ENCODE measurements at regions of chr10 and their contacts with region 1.

Region 1: DNA sequence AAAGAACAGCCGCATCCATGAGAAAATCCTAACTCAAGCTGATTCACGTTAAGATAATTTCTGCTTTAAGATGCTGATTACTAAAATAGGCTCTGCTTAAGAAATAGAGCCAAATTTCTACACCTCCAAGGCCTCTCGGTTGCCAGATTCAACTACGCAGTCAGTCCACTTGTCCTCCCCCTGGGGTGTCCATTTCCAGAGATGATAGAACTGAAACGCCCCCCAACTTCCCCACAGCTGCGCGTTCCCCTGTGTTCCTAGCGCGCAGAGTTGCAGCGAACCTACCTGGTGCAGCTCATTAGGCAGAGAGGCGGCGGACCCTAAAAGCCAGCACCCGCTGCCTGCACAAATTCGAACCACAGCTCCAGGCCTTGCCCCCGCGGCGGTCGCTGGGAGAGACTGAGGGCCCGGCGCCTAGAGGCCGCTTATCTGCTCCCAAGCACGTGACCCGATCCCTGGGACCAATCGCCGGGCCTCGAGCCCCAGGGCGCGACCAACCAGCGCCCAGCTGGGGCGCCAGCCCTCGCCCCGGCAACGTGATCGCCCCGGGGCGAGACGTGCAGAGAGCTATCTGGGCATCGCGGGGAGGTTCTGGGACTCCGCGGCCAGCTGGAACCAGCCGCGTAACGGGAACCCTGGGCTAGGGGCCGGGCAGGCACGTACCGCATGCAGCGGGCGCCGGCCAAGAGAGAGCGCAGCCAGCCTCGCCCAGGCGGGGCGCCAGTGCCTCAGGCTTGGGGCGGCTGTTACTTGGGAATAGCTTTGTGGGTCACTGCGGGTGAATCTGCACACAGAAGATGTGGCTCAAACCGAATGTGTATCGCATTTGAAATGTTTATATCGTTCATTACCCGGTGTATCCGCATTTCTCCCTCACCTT is at the start of gene PPP1R3C:
- DNase-seq: peak; percentile 88
- H3K4me3 ChIP-seq: peak within 1 kb of the TSS; percentile 47 to 57
- H3K27ac ChIP-seq: peak within 1 kb of the TSS; percentile 58 to 69
- H3K4me1 ChIP-seq: no peaks in the 10 kb centered on the region
- H3K27me3 ChIP-seq: no peaks in the 10 kb centered on the region
- CTCF ChIP-seq: peak in 3 of 4 experiments; percentile 7 to 37 (median 30)
- POLR2A ChIP-seq: peak; percentile 73
- total RNA-seq, gene PPP1R3C: 10.6 to 20.5 TPM

Region 2: GRCh38 chr10:91389636-91390512 is 243.0 kb before region 1 on chr10:
- intact Hi-C with region 1: loop called (anchors 5 kb)
- DNase-seq: peak; percentile 36
- H3K4me3 ChIP-seq: no peak overlapping the region
- H3K27ac ChIP-seq: no peak overlapping the region
- H3K4me1 ChIP-seq: peaks cover 2% of the 10 kb centered on the region
- H3K27me3 ChIP-seq: no peaks in the 10 kb centered on the region
- CTCF ChIP-seq: peak; percentile 67 to 82 (median 74)
- POLR2A ChIP-seq: no peak

Region 3: DNA sequence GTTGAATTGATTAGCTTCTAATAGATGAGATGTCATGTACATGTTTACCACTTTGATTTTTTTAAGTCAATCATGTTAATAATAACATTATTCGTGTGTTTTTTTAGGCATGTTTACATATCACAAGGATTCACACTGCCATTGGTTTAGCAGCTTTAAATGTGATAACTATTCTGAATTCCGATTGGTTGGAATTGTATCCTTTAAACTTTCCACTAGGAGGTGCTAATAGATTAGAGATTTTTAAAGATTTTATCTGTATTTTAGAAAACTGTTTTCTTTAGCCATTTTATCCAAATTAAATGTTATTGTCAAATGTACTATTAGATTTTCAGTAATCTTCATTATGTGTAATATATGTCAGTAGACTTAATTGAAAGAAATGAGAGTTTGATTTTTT is 139.6 kb before region 1 on chr10:
- intact Hi-C with region 1: loop called (anchors 5 kb)
- DNase-seq: no peak
- H3K4me3 ChIP-seq: no peak overlapping the region
- H3K27ac ChIP-seq: no peak overlapping the region
- H3K4me1 ChIP-seq: no peaks in the 10 kb centered on the region
- H3K27me3 ChIP-seq: no peaks in the 10 kb centered on the region
- CTCF ChIP-seq: peak in 3 of 4 experiments; percentile 27 to 63 (median 58)
- POLR2A ChIP-seq: no peak

Region 4: DNA sequence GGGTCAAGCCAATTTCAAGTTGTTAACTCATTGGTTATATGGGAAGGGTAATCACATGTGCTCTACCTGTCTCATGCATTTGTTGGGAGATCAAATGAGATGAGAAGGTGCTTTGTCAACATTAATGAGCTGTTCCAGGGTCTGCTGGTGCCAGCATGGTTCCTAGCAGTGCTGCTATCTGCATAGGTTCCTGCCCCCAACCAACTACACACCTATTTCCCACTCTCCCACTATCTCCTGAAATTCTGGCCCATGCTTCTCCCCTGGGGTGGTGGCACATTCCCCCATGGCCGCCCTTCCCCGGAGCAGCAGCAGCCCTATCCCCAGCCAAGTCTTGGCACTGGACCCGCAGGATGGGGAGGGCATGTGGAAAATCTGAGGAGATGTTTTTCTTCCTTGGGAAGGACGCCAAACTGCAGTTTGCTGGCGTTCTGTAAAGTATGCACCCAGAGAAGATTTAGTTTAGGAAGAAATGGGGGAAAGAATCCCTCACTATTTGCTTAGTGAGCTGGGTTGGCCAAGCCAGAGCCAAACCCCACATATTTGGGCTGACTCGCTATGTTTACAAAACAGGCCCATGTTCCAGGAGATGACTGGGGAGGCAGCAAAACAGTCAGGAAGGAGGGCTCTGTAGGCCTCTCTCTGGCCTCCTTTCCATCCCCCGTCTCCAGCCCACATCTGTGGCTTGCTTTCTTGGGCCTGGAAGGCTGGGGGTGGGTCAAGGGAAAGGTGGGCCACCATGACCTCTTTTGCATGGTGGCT is 42.6 kb before region 1 on chr10:
- intact Hi-C with region 1: loop called (anchors 5 kb)
- DNase-seq: peak; percentile 72
- H3K4me3 ChIP-seq: no peak overlapping the region
- H3K27ac ChIP-seq: peak overlapping the region; percentile 62 to 68
- H3K4me1 ChIP-seq: peaks cover 5% of the 10 kb centered on the region
- H3K27me3 ChIP-seq: no peaks in the 10 kb centered on the region
- CTCF ChIP-seq: no peak
- POLR2A ChIP-seq: no peak

Region 5: DNA sequence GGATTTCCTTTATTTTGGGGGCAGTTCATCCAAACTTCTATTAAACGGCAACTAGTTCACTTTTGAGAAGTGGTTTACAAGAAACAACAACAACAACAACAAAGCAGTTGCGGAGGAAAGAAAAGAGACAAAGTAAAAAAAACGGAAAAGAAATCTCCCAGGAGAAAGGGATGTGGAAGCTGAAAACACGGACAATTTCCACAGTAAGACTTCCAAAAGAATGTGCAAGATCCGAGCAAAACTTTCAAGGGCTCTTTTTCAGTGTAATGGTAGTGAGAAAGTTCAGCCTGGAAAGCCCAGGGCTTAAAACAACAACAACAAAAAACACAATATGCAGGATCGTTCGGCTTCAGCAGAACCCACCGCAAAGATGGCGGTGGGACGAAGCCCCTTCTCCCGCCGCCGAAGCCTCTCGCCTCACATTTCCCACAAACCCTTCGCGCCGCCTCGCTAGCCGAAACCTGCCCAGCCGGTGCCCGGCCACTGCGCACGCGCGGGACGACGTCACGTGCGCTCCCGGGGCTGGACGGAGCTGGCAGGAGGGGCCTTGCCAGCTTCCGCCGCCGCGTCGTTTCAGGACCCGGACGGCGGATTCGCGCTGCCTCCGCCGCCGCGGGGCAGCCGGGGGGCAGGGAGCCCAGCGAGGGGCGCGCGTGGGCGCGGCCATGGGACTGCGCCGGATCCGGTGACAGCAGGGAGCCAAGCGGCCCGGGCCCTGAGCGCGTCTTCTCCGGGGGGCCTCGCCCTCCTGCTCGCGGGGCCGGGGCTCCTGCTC is 165.2 kb after region 1 on chr10 and contains the start of gene TNKS2:
- intact Hi-C with region 1: loop called (anchors 10 kb)
- DNase-seq: peak; percentile 90
- H3K4me3 ChIP-seq: peak within 1 kb of the TSS; percentile 87 to 99
- H3K27ac ChIP-seq: peak within 1 kb of the TSS; percentile 90 to 98
- H3K4me1 ChIP-seq: no peaks in the 10 kb centered on the region
- H3K27me3 ChIP-seq: no peaks in the 10 kb centered on the region
- CTCF ChIP-seq: peak in 2 of 4 experiments; percentile 13 to 23
- POLR2A ChIP-seq: peak; percentile 95
- total RNA-seq, gene TNKS2: 38.5 to 43.2 TPM